Calu3 (cell line): ENCODE measurements at regions of chr1 and their contacts with region 1.

Region 1: DNA sequence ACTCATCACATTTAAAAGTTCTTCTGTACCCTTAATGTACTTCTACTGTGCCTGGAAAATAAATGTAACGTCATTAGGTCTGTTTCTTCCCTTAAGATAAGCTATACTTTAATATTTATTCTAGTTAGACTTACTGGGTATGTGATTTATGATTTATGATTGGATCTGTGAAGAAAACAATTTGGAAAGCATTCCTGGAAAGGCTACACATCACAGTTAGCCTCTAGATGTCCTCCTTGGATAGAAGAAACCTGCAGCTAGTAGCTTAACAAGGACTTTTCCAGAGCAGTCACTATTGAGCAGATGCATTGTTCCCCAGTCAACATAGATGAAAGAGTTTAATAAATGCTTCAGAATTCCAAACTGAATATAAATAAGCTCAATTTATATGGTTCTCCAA is 22.2 kb upstream of the ABL2 start:
- DNase-seq: no peak
- H3K4me3 Mint-ChIP-seq: no peak overlapping the region
- H3K27ac Mint-ChIP-seq: no peak overlapping the region
- H3K4me1 Mint-ChIP-seq: no peaks in the 10 kb centered on the region
- H3K27me3 Mint-ChIP-seq: no peaks in the 10 kb centered on the region
- CTCF ChIP-seq: no peak

Region 2: DNA sequence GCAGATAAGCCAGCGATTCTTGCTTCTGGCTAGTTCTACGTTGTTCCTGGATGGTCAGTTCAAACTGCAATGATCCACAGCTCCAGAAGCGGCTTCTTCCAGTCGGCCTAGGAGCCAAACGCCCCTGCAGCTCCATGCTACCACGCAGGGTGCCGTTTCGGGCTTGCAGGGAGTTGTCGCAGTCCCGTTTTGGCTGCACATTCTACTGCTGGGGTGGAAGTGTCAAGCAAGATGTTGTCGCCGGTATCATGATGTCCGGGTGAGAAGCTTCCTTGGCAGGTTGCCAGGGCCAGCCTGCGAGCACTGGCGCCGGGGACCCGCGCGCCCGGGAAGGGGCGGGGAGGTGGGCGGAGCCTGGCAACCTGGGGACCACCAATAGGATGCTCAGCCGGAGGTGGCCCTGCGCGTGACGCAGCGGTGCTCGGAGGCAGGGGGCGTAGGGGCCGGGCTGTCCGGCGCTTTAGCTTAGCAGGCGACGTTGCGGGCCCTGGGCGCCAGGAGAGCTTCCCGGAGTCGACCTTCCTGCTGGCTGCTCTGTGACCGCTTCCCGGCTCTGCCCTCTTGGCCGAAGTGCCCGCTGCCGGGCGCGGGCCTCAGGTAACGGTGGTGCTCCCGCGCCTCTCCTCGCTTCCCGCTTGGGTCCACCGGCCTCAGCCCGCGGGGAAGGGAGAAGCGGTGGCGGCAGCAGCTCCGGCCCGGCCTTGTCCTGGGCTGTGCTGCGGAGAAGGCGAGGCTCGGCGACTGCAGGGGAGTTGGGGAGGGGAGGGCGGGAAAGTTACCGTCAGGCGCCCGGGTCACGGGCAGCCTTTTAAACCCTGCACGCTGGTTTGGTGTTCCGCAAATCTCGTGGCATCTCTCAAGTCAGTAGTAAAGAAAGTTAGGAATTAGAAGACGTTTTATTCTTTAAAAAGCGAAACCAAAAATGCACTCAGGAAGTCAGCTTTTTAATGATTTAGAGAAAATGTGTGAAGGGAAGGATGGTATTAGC is 42.0 kb after region 1 on chr1 and contains the start of gene SOAT1:
- CTCF ChIA-PET with region 1: interaction called, 13 read pairs
- intact Hi-C with region 1: loop called (anchors 1 kb)
- DNase-seq: peak; percentile 98
- H3K4me3 Mint-ChIP-seq: peak within 1 kb of the TSS; percentile 99
- H3K27ac Mint-ChIP-seq: peak within 1 kb of the TSS; percentile 93
- H3K4me1 Mint-ChIP-seq: peaks cover 46% of the 10 kb centered on the region
- H3K27me3 Mint-ChIP-seq: no peaks in the 10 kb centered on the region
- CTCF ChIP-seq: peak; percentile 35
- total RNA-seq, gene SOAT1: 134 and 190 TPM in 2 replicates

Region 3: DNA sequence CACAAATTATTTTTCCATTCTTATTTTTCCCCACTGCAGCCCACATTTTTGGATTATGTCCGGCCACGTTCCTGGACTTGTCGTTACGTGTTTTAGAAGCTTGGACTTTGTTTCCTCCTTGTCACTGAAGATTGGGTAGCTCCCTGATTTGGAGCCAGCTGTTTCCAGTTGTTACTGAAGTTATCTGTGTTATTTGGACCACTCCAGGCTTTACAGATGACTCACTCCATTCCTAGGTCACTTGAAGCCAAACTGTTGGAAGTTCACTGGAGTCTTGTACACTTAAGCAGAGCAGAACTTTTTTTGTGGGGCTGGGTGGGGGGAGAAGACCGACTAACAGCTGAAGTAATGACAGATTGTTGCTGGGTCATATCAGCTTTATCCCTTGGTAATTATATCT is 101.9 kb after region 1 on chr1:
- CTCF ChIA-PET with region 1: no interaction called
- intact Hi-C with region 1: no loop called
- DNase-seq: no peak
- H3K4me3 Mint-ChIP-seq: no peak overlapping the region
- H3K27ac Mint-ChIP-seq: no peak overlapping the region
- H3K4me1 Mint-ChIP-seq: no peaks in the 10 kb centered on the region
- H3K27me3 Mint-ChIP-seq: no peaks in the 10 kb centered on the region
- CTCF ChIP-seq: no peak

Region 4: DNA sequence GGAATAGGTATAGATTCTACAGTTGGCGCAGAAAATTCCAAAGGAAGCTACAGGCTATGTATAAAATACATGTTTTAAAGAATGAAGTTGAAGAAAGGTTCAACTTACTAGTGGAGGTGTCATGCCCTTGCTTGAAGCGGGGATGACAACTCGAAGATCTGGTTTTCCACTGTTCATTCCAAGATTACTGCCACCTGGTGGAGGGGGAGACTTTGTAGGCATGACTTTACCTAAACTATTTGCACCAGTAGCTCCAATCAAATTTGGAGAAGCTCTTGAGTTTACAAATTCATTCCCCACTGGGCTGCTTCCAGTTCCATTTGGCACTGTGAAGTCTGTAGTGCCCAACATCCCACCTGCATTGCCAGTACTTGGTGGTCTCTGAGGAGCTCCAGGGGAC is 195.8 kb after region 1 on chr1:
- CTCF ChIA-PET with region 1: interaction called, 9 read pairs
- intact Hi-C with region 1: loop called (anchors 2 kb)
- DNase-seq: peak; percentile 59
- H3K4me3 Mint-ChIP-seq: no peak overlapping the region
- H3K27ac Mint-ChIP-seq: peak overlapping the region; percentile 25
- H3K4me1 Mint-ChIP-seq: no peaks in the 10 kb centered on the region
- H3K27me3 Mint-ChIP-seq: no peaks in the 10 kb centered on the region
- CTCF ChIP-seq: peak; percentile 59

Region 5: GRCh38 chr1:179599623-179600249 is 348.1 kb after region 1 on chr1:
- CTCF ChIA-PET with region 1: interaction called, 5 read pairs
- intact Hi-C with region 1: loop called (anchors 5 kb)
- DNase-seq: peak; percentile 67
- H3K4me3 Mint-ChIP-seq: no peak overlapping the region
- H3K27ac Mint-ChIP-seq: no peak overlapping the region
- H3K4me1 Mint-ChIP-seq: peaks cover 9% of the 10 kb centered on the region
- H3K27me3 Mint-ChIP-seq: peaks cover 70% of the 10 kb centered on the region
- CTCF ChIP-seq: peak; percentile 45